ENCODE measurements at regions of chr20 and their contacts with region 1.

Region 1: DNA sequence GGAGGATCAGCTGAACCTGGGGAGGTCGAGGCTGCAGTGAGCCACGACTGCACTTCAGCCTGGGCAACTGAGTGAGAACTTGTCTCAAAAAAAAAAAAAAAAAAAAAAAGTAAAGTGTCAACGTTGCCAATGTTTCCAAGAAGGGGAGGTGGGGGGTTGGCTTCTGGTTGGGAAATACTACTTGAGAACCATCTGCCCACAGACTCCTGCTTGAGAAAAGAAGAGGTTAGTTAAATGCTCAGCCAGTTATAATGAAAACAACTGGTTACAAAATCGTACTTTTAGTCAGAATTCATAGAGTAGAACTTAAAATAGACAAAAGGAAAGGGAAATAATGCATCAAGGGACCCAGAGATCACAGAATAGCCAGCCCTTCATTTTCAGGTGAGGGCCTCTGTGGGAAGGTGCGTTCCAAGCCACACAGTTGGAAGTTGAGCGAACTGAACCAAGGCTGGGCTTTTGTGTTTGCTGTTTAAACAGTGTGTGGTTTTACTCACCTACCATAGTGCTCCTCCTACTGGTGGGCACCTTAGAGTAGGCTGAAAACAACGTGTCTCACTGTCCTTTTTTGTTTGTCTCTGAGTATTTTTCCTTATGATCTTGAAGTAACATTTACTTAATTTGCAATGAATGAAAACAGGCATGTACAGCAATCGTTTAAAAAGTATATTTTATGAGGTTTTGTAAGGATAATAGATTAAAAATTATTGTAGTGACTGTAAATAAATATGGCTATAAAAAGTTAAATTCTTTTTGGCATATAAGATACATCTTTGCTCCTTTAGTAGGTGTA is 200.7 kb downstream of the BCAS1 start:
- DNase-seq: peak; percentile 91
- ATAC-seq: peak; percentile 73
- H3K4me3 ChIP-seq: no peak overlapping the region
- H3K27ac ChIP-seq: peak overlapping the region; percentile 68
- H3K4me1 ChIP-seq: peaks cover 51% of the 10 kb centered on the region
- H3K27me3 ChIP-seq: no peaks in the 10 kb centered on the region
- CTCF ChIP-seq: peak; percentile 85 to 93 (median 87)
- EP300 ChIP-seq: peak in 1 of 2 experiments; percentile 61; a peak in 2 of 4 replicates
- POLR2A ChIP-seq: no peak
- RAD21 ChIP-seq: peak; percentile 86

Region 2: GRCh38 chr20:53578492-53579222 is 291.0 kb before region 1 on chr20:
- CTCF ChIA-PET with region 1: interaction called, 5 read pairs
- POLR2A ChIA-PET with region 1: interaction called, 6 read pairs
- RAD21 ChIA-PET with region 1: interaction called, 11 read pairs
- SMC1A ChIA-PET with region 1: interaction called, 12 read pairs
- in situ Hi-C with region 1: loop called (anchors 5 kb)
- intact Hi-C with region 1: loop called (anchors 2 kb)
- DNase-seq: peak; percentile 76
- ATAC-seq: peak; percentile 61
- H3K4me3 ChIP-seq: peak overlapping the region; percentile 79
- H3K27ac ChIP-seq: peak overlapping the region; percentile 69
- H3K4me1 ChIP-seq: peaks cover 9% of the 10 kb centered on the region
- H3K27me3 ChIP-seq: no peaks in the 10 kb centered on the region
- CTCF ChIP-seq: peak; percentile 65 to 82 (median 79)
- EP300 ChIP-seq: no peak
- POLR2A ChIP-seq: no peak
- RAD21 ChIP-seq: peak; percentile 91

Region 3: DNA sequence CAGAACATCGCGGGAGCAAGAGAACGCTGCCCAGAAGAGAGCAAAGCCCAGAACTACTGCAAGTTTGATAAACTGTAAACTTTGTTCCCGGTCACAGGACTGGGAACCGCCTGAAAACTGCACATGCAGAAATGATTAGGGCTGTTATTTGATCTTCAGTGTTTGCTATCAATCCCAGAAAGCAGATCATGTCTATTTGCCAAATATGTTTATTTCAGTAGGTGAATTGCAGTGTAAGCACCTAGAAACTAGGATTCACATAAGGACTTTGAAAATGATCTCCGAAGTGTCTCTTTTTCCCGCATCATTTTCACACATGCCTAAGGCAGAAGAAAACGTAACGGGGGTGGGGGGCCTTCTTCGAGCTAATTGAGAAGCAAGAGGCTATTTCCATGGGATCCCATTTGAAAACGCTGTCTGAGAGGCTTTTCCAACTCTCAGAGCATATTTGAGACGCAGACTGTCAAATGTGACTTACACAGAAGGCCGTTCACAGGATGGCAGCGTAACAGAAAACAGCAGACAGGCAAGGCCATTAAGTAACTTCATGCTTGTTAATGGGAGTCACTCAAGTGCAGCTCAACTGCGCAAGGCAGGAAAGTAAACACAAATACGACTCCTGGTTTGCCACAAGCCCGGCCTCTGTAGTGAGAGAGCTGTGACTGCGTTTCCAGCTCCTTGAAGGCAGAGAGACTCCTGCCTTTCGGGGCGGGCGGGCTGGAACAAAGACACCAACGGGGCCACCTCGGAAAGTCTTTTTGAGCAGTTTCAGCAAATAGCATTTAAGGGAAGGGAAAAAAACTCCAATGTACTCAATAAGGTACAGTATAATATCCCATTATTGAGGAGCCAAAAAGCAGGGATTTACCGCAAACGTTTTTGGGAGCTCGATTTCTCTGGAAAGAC is 131.4 kb before region 1 on chr20:
- CTCF ChIA-PET with region 1: interaction called, 10 read pairs
- POLR2A ChIA-PET with region 1: interaction called, 12 read pairs
- RAD21 ChIA-PET with region 1: interaction called, 21 read pairs
- SMC1A ChIA-PET with region 1: interaction called, 23 read pairs
- in situ Hi-C with region 1: no loop called
- intact Hi-C with region 1: loop called (anchors 5 kb)
- DNase-seq: no peak
- ATAC-seq: no peak
- H3K4me3 ChIP-seq: 0 out of 2 replicates have a peak overlapping the region, but pooled peaks have one; percentile 69
- H3K27ac ChIP-seq: peak overlapping the region; percentile 86
- H3K4me1 ChIP-seq: peaks cover 56% of the 10 kb centered on the region
- H3K27me3 ChIP-seq: no peaks in the 10 kb centered on the region
- CTCF ChIP-seq: no peak
- EP300 ChIP-seq: no peak
- POLR2A ChIP-seq: no peak
- RAD21 ChIP-seq: no peak

Region 4: DNA sequence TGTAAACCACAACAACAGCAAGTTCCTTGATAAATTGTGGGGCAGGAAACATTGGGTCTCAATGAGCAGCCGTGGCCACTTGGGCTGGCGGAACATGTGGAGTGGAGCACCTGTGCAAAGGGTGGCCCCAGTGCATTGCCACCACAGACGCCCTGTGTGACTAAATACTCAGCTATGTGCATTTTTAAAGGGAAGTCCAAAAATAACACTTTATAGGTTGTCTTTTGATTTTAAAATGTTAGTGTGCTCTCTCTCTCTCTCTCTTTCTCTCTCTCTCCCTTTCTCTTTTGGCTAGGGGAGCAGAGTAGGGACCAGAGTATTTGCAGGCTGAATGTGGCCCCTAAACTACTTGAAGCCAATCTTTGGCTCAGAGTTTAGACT is 35.6 kb before region 1 on chr20:
- CTCF ChIA-PET with region 1: interaction called, 10 read pairs
- POLR2A ChIA-PET with region 1: interaction called, 16 read pairs
- RAD21 ChIA-PET with region 1: interaction called, 27 read pairs
- SMC1A ChIA-PET with region 1: interaction called, 49 read pairs
- in situ Hi-C with region 1: no loop called
- intact Hi-C with region 1: loop called (anchors 5 kb)
- DNase-seq: no peak
- ATAC-seq: peak; percentile 64
- H3K4me3 ChIP-seq: no peak overlapping the region
- H3K27ac ChIP-seq: peak overlapping the region; percentile 69
- H3K4me1 ChIP-seq: peaks cover 42% of the 10 kb centered on the region
- H3K27me3 ChIP-seq: no peaks in the 10 kb centered on the region
- CTCF ChIP-seq: no peak
- EP300 ChIP-seq: no peak; a peak in 1 of 4 replicates
- POLR2A ChIP-seq: 0 out of 2 replicates have a peak, but pooled peaks have one; percentile 21
- RAD21 ChIP-seq: peak; percentile 14; the same call in 1 of the 2 replicates

Region 5: DNA sequence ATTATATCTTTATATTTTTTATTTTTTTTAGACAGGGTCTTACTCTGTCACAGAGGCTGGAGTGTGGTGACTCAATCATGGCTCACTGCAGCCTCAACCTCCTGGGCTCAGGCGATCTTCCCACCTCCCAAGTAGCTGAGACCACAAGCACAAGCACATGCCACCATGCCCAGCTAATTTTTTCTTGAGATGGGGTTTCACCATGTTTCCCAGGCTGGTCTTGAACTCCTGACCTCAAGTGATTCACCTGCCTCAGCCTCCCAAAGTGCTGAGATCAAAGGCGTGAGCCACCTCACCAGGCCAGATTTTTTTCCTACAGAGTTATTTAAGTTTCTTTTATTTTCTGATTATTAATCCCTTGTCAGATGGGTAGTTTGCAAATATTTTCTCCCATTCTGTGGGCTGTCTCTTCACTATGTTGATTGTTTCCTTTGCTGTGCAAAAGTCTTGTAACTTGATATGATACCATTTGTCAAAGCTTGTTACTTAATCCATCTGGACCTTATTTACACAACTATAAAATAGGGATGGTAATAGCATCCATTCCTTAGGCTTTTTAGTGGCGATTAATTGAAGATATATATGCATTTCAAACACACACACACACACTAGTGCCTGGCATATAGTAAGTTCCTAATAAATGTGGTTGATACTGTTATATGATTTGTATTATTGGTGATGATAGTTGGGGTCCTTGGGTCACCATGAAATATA is 13.6 kb after region 1 on chr20:
- CTCF ChIA-PET with region 1: interaction called, 8 read pairs
- POLR2A ChIA-PET with region 1: interaction called, 5 read pairs
- RAD21 ChIA-PET with region 1: interaction called, 4 read pairs
- SMC1A ChIA-PET with region 1: interaction called, 13 read pairs
- in situ Hi-C with region 1: no loop called
- intact Hi-C with region 1: no loop called
- DNase-seq: no peak
- ATAC-seq: no peak
- H3K4me3 ChIP-seq: no peak overlapping the region
- H3K27ac ChIP-seq: no peak overlapping the region
- H3K4me1 ChIP-seq: peaks cover 11% of the 10 kb centered on the region
- H3K27me3 ChIP-seq: no peaks in the 10 kb centered on the region
- CTCF ChIP-seq: no peak
- EP300 ChIP-seq: no peak
- POLR2A ChIP-seq: no peak
- RAD21 ChIP-seq: no peak

Region 6: DNA sequence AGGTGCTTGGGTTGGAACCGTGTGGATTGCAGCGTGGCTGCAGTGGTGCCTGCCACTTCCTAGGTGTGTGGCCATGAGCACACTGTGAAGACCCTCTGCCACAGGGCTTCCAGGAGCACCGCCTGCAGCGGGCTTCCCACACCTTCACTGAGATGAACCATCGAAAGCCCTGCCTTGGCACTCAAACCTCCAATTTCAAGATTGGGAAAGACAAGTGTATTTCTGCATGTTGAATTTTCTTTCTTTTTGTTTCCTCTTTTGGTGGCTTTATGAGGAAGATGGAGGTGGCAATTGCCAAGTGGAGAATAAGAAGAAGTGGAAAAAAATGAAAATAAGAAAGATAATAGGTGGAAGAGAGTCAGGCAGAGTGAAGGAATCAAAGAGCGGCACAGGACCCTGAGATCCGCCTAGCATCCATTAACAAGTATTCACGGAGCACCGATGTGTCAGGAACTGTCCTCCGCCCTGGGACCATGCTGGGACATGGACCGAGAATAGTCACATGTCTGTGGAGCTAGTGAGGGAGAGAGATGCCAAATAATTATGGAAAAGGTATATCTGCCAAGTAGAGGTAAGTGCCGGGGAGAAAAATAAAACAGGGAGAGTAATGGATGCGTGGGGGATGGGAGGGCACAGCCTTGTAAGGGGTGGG is 40.8 kb after region 1 on chr20:
- CTCF ChIA-PET with region 1: interaction called, 30 read pairs
- POLR2A ChIA-PET with region 1: interaction called, 17 read pairs
- RAD21 ChIA-PET with region 1: interaction called, 74 read pairs
- SMC1A ChIA-PET with region 1: interaction called, 59 read pairs
- in situ Hi-C with region 1: no loop called
- intact Hi-C with region 1: loop called (anchors 1 kb)
- DNase-seq: no peak
- ATAC-seq: no peak
- H3K4me3 ChIP-seq: no peak overlapping the region
- H3K27ac ChIP-seq: no peak overlapping the region
- H3K4me1 ChIP-seq: peaks cover 27% of the 10 kb centered on the region
- H3K27me3 ChIP-seq: no peaks in the 10 kb centered on the region
- CTCF ChIP-seq: no peak
- EP300 ChIP-seq: no peak
- POLR2A ChIP-seq: no peak
- RAD21 ChIP-seq: no peak

Region 7: GRCh38 chr20:53939572-53940359 is 70.1 kb after region 1 on chr20:
- CTCF ChIA-PET with region 1: interaction called, 17 read pairs
- POLR2A ChIA-PET with region 1: interaction called, 10 read pairs
- RAD21 ChIA-PET with region 1: interaction called, 18 read pairs
- SMC1A ChIA-PET with region 1: interaction called, 26 read pairs
- in situ Hi-C with region 1: no loop called
- intact Hi-C with region 1: no loop called
- DNase-seq: peak; percentile 93
- ATAC-seq: peak; percentile 81
- H3K4me3 ChIP-seq: 0 out of 2 replicates have a peak overlapping the region, but pooled peaks have one; percentile 63
- H3K27ac ChIP-seq: peak overlapping the region; percentile 84
- H3K4me1 ChIP-seq: peaks cover 54% of the 10 kb centered on the region
- H3K27me3 ChIP-seq: no peaks in the 10 kb centered on the region
- CTCF ChIP-seq: peak; percentile 70 to 96 (median 83)
- EP300 ChIP-seq: 0 out of 4 replicates have a peak, but pooled peaks of 1 of the 2 experiments have one; percentile 10
- POLR2A ChIP-seq: no peak
- RAD21 ChIP-seq: peak; percentile 98

Measured in GM12878 (cell line).